ENCODE measurements at regions of chr5 and their contacts with region 1.

Region 1: GRCh38 chr5:107673368-107674136 is 2.8 kb upstream of the EFNA5 start:
- DNase-seq: no peak
- ATAC-seq: peak; percentile 64
- H3K4me3 ChIP-seq: peak overlapping the region; percentile 83 to 86
- H3K27ac ChIP-seq: peak overlapping the region; percentile 92
- H3K4me1 ChIP-seq: peaks cover 2% of the 10 kb centered on the region
- H3K27me3 ChIP-seq: no peaks in the 10 kb centered on the region; the same call in 1 of the 2 replicates
- CTCF ChIP-seq: peak; percentile 97

Region 2: DNA sequence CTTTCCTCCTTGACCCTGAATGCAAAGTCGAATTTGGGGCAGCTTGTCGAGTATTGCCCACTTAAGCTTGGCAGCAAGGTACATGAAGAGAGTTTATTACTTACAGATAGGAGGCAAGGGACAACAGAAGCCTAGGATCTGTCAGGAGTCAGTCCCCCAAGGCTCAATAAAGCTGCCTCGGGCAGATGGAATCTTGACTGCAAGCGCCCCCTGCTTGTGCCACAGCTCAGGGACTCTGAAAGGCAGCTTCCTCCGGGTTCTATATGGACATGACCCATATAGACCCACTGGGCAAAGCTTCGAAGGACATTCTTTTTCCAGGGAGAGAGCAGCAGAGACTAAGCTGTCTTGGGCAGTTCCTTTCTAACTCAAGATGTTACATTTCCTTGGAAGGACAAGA is 974.4 kb before region 1 on chr5:
- CTCF ChIA-PET with region 1: interaction called, 14 read pairs
- POLR2A ChIA-PET with region 1: no interaction called
- in situ Hi-C with region 1: no loop called
- intact Hi-C with region 1: no loop called
- DNase-seq: no peak
- ATAC-seq: no peak
- H3K4me3 ChIP-seq: no peak overlapping the region
- H3K27ac ChIP-seq: no peak overlapping the region
- H3K4me1 ChIP-seq: no peaks in the 10 kb centered on the region
- H3K27me3 ChIP-seq: no peaks in the 10 kb centered on the region
- CTCF ChIP-seq: peak; percentile 19; the same call in 1 of the 2 replicates

Region 3: DNA sequence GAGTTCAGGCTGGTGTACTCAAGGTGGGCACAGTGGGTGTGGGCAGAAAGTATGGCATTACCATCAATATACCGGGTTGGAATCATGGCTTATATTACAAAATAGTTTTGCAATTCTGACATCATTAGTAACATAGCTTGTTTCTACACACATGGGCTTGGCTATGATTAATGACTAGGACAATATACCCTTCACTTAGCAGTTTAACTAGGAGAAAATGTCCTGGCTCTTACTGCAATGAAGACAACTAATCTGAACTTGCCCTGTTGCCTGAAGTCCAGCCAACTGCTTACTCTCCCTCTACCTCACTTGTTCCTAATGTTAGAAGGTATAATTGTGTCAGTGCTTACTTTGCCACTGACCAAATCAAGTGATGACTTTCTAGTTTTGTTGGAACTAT is 615.3 kb before region 1 on chr5:
- CTCF ChIA-PET with region 1: no interaction called
- POLR2A ChIA-PET with region 1: interaction called, 16 read pairs
- in situ Hi-C with region 1: no loop called
- intact Hi-C with region 1: no loop called
- DNase-seq: no peak
- ATAC-seq: no peak
- H3K4me3 ChIP-seq: no peak overlapping the region
- H3K27ac ChIP-seq: no peak overlapping the region
- H3K4me1 ChIP-seq: no peaks in the 10 kb centered on the region
- H3K27me3 ChIP-seq: no peaks in the 10 kb centered on the region
- CTCF ChIP-seq: no peak

Region 4: GRCh38 chr5:107476783-107477182 is 196.8 kb before region 1 on chr5:
- CTCF ChIA-PET with region 1: no interaction called
- POLR2A ChIA-PET with region 1: no interaction called
- in situ Hi-C with region 1: no loop called
- intact Hi-C with region 1: loop called (anchors 10 kb)
- DNase-seq: no peak
- ATAC-seq: no peak
- H3K4me3 ChIP-seq: no peak overlapping the region
- H3K27ac ChIP-seq: no peak overlapping the region
- H3K4me1 ChIP-seq: peaks cover 31% of the 10 kb centered on the region
- H3K27me3 ChIP-seq: no peaks in the 10 kb centered on the region
- CTCF ChIP-seq: no peak

Region 5: DNA sequence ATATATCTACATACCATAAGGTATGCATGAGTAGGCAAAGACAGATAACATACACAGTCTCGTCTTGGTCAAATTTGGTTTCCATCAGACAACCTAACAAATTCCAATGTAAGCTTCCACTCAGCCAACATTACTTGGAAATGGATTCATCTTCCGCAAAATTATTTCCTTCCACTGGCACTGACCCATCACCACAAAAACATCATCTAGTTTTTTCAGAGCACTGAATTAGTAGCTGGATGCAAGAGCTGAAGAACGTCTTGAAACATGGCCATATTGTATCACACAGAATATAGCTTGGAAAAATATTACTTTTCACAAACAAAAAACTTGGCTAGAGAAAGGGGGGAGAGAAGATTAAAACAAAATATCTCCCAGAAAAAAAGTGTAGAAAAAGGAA is 76.3 kb before region 1 on chr5:
- CTCF ChIA-PET with region 1: no interaction called
- POLR2A ChIA-PET with region 1: interaction called, 11 read pairs
- in situ Hi-C with region 1: no loop called
- intact Hi-C with region 1: no loop called
- DNase-seq: no peak
- ATAC-seq: no peak
- H3K4me3 ChIP-seq: no peak overlapping the region
- H3K27ac ChIP-seq: no peak overlapping the region
- H3K4me1 ChIP-seq: no peaks in the 10 kb centered on the region; the same call in 1 of the 2 replicates
- H3K27me3 ChIP-seq: no peaks in the 10 kb centered on the region
- CTCF ChIP-seq: no peak